ENCODE measurements at regions of chr10 and their contacts with region 1.

Region 1: DNA sequence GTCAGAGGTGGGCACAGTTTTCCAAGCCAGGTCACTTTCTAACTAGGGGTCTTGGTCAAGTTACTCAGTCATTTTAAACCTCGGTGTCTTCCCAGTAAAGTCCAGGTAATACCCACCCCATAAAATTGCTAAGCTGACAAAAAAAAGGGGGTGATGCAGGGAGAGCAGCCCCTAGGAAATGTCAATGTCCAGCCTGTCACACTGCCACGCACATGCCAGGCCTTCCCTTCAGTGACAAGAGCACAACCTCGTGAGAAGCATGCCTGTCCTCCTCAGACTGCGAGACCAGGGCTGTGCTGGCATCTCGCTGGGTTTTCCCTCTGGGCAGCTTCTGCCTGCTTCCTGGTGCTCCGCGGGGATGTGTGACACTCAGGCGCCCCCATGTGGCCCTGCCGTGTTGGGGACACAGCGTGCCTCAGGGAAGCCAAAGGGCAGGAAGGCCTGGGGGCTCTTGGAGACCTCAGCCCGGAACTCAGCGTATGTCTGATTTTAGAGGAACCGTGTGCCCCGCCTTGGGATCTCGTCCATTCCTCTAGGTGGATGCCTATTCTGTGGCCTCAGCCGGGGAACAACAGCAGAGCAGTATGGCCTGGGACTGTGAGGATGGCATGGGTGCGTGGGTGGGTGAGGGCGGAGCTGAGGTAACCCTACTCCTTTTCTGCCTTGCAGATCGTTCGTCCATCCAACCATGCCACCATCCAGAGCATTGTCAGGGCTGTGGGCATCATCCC is 10.2 kb upstream of the GDF2 start:
- DNase-seq: peak; percentile 92
- ATAC-seq: peak; percentile 90
- H3K4me3 Mint-ChIP-seq: no peak overlapping the region
- H3K27ac Mint-ChIP-seq: peak overlapping the region; percentile 72
- H3K4me1 Mint-ChIP-seq: peaks cover 20% of the 10 kb centered on the region
- H3K27me3 Mint-ChIP-seq: no peaks in the 10 kb centered on the region
- CTCF ChIP-seq: peak; percentile 97

Region 2: DNA sequence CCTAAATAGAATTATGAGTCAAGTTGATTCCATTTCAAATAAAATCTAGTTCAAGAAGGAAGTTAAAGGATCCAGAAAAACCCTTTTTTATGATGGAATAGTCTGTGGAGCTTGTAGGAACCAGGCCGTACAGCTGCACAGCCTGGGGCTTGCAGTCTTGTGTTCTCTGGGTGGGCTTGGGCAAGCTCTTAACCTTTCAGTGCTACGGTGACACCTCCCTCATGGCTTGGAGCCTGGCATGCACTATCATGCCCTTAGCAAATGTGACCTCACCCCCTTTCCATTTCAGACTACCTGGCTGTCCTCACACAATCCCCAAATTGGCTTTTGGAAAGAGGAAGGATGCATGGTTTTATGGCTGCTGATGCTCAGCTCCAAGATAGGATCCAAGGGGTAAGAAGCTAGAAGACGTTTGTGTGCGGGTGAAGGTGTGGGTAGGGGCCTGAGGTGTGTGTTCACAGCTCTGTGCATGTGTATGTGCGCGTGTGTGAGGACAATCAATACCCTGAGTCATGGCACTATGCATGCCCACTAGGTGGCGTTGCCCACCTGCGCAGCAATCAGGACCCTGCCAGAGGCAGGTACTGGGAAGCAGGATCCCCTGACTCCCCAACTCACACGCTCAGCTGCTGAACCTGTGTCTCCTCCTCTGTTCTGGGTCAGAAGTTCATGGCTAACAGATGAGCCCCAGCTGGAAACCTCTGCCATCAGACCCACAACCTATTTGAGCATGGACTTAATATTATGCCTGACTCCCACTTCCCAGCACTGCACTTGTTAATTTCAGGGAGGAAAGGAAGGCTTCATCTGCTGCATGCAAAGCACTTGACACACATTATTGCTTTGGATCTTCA is 287.5 kb before region 1 on chr10:
- CTCF ChIA-PET with region 1: interaction called, 56 read pairs
- POLR2A ChIA-PET with region 1: no interaction called
- intact Hi-C with region 1: loop called (anchors 2 kb)
- DNase-seq: peak; percentile 82
- ATAC-seq: peak; percentile 93
- H3K4me3 Mint-ChIP-seq: no peak overlapping the region
- H3K27ac Mint-ChIP-seq: no peak overlapping the region
- H3K4me1 Mint-ChIP-seq: peaks cover 2% of the 10 kb centered on the region
- H3K27me3 Mint-ChIP-seq: no peaks in the 10 kb centered on the region
- CTCF ChIP-seq: peak; percentile 86

Region 3: DNA sequence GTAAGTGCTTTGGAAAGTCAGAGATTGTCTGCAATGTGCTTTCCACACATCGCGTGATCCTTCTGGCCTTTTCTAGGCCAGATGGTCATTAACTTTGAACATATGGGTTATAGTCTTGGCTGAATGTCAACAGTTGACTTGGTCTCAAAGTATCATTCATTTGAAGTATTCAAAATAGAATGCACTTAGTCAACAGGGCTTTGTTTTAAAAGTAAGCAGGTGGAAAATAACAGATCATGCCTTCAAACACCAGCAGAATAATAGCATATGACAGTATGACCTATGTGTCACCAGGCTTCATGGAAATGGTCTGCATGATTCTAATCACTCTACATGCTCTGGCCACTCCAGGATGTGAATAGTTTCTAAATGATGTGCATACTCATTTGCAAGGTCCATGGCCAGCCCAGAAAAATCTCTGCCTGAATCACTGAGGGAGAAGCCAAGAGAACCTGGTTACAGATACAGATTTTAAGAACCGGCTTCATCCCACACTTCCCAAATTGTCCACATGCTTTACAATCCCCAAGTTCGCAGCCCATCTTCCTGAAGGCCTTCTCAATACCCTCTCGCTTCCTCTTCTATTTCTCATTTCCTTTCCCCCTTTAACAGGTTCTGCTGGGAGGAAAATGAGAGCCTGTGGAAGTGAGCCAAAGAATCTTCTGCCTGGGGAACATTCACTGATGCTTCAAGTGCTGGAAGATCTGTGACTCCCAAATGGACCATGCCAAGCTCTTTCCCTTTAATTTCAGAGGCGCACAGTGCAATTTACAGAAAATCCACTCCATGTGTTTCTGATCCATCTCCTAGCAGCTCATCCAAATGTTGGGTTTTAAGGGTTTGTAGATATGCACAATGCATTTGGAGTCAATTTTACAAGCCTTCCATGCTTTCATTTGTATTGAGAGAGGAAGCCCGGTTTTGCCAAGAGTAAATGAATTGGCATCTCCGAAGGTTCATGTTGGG is 134.9 kb before region 1 on chr10:
- CTCF ChIA-PET with region 1: interaction called, 14 read pairs
- POLR2A ChIA-PET with region 1: no interaction called
- intact Hi-C with region 1: no loop called
- DNase-seq: no peak
- ATAC-seq: peak; percentile 68
- H3K4me3 Mint-ChIP-seq: no peak overlapping the region
- H3K27ac Mint-ChIP-seq: no peak overlapping the region
- H3K4me1 Mint-ChIP-seq: peaks cover 8% of the 10 kb centered on the region
- H3K27me3 Mint-ChIP-seq: no peaks in the 10 kb centered on the region
- CTCF ChIP-seq: no peak

Region 4: DNA sequence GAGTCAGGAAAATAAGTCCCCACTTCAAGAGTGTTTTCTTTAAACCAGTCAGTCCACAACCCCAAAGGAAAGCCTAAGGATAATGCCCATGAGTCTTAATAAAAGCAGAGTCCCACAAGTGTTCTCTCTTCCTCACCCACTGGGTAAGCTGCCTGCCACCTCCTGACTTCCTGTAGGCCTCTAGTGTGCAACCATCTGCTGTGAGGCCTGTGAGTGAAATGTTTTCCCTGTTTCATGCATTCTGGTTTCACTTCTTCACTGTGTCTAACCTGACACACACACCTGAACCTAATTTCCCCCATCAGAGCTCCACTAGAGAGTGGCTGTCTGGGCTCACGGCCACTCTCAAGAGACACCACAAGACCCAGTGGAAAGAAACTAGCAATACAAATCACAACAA is 51.0 kb before region 1 on chr10:
- CTCF ChIA-PET with region 1: interaction called, 11 read pairs
- POLR2A ChIA-PET with region 1: no interaction called
- intact Hi-C with region 1: no loop called
- DNase-seq: peak; percentile 55
- ATAC-seq: peak; percentile 57
- H3K4me3 Mint-ChIP-seq: peak overlapping the region; percentile 44
- H3K27ac Mint-ChIP-seq: peak overlapping the region; percentile 93
- H3K4me1 Mint-ChIP-seq: peaks cover 93% of the 10 kb centered on the region
- H3K27me3 Mint-ChIP-seq: no peaks in the 10 kb centered on the region
- CTCF ChIP-seq: no peak

Region 5: DNA sequence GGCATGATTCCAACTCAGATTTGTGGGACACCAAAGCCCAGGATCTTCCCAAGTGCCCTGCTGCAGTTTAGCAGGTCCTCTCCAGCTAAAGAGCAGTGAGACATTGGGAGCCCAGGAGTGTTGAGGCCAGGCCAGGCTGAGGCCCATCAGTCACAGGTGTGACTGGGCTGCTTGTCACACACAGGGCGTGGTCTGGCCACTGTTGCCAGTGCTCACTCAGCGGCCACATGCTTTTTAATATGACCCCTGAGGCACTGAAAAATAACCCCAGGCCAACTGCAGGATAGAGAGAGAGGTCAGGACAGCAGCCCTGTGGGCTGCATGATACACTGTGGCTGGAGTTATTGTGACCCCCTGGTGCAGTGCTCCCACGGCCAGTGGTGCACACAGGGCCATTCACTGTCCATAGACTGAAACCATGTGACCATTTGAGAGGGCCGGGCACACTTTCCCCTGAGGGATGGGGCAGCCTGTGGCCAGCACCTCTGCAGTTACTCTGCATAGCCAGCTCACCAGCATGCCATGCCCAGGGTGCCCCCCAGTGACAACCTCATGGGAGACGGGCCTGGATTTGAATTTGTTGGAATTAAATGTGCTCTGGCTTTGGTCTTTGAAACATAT is 14.3 kb after region 1 on chr10:
- CTCF ChIA-PET with region 1: interaction called, 16 read pairs
- POLR2A ChIA-PET with region 1: no interaction called
- intact Hi-C with region 1: no loop called
- DNase-seq: no peak
- ATAC-seq: no peak
- H3K4me3 Mint-ChIP-seq: no peak overlapping the region
- H3K27ac Mint-ChIP-seq: no peak overlapping the region
- H3K4me1 Mint-ChIP-seq: no peaks in the 10 kb centered on the region
- H3K27me3 Mint-ChIP-seq: no peaks in the 10 kb centered on the region
- CTCF ChIP-seq: no peak

Region 6: GRCh38 chr10:47354162-47354561 is 42.1 kb after region 1 on chr10:
- CTCF ChIA-PET with region 1: no interaction called
- POLR2A ChIA-PET with region 1: no interaction called
- intact Hi-C with region 1: no loop called
- DNase-seq: no peak
- ATAC-seq: no peak
- H3K4me3 Mint-ChIP-seq: no peak overlapping the region
- H3K27ac Mint-ChIP-seq: no peak overlapping the region
- H3K4me1 Mint-ChIP-seq: no peaks in the 10 kb centered on the region
- H3K27me3 Mint-ChIP-seq: no peaks in the 10 kb centered on the region
- CTCF ChIP-seq: no peak

Region 7: GRCh38 chr10:47421057-47421952 is 109.2 kb after region 1 on chr10:
- CTCF ChIA-PET with region 1: no interaction called
- POLR2A ChIA-PET with region 1: no interaction called
- intact Hi-C with region 1: no loop called
- DNase-seq: no peak
- ATAC-seq: no peak
- H3K4me3 Mint-ChIP-seq: no peak overlapping the region
- H3K27ac Mint-ChIP-seq: no peak overlapping the region
- H3K4me1 Mint-ChIP-seq: no peaks in the 10 kb centered on the region
- H3K27me3 Mint-ChIP-seq: no peaks in the 10 kb centered on the region
- CTCF ChIP-seq: no peak